Activated naive CD4-positive, alpha-beta T cell treated with anti-CD3 and anti-CD28 coated beads for 36 hours (primary cell): ENCODE measurements at regions of chr11 and their contacts with region 1.

Region 1: GRCh38 chr11:118002541-118003423 is 16.6 kb downstream of the IL10RA start:
- DNase-seq: peak; percentile 73
- H3K4me3 Mint-ChIP-seq: no peak overlapping the region
- H3K27ac Mint-ChIP-seq: peak overlapping the region; percentile 80
- H3K4me1 Mint-ChIP-seq: peaks cover 68% of the 10 kb centered on the region
- H3K27me3 Mint-ChIP-seq: no peaks in the 10 kb centered on the region

Region 2: DNA sequence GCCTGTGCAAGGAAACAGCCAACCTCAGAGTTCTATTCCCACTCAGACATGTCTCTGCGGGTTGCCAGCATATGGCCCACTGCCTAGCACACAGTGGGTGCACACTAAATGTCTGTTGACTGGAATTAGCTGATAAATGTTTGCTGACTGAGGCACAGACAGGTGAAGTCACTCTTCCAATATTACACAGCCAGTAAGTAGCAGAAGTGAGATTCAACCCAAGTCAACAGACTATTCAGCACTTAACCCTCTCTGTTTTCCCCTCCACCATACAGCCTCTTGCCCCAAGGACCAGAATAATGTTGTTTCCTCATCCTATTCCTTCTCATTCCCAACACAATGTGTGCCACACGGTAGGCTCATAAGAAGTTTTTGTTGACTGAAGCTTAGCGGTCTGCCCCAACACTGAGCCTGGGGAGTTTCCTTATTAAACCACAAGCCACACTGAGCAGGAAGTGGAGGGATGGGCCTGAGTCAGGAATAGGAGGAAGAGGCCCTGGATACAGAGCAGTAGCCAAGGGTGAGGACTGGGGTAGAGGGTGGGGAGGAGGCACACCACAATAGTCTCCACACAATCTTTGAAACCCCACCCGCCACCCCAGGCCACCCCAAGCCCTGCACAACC is 32.3 kb before region 1 on chr11:
- CTCF ChIA-PET with region 1: interaction called, 3 read pairs
- intact Hi-C with region 1: loop called (anchors 1 kb)
- DNase-seq: peak; percentile 71
- H3K4me3 Mint-ChIP-seq: peak overlapping the region; percentile 2
- H3K27ac Mint-ChIP-seq: peak overlapping the region; percentile 48
- H3K4me1 Mint-ChIP-seq: peaks cover 56% of the 10 kb centered on the region
- H3K27me3 Mint-ChIP-seq: no peaks in the 10 kb centered on the region

Region 3: DNA sequence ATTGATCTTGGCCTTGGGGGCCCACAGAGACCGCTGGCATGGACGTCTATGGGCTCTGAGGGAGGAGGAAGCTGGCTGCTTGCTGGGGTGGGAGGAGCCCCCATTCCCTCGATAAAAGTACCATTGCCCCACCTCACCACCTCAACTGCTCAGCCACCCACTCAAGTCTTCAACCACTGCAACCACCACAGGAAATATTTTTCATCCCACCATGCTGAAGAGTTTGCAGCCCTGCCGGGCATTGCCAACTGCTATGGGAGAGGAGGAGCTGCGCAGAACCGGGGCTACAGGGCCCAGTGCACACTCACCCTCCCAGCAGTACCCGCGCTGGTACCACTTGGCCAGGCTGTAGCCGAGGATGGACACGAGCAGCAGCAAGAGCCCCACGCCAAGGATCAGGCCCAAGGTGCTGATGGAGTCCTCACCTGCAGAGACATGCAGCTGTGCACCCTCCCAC is 12.6 kb after region 1 on chr11:
- CTCF ChIA-PET with region 1: interaction called, 3 read pairs
- intact Hi-C with region 1: loop called (anchors 1 kb)
- DNase-seq: no peak
- H3K4me3 Mint-ChIP-seq: no peak overlapping the region
- H3K27ac Mint-ChIP-seq: no peak overlapping the region
- H3K4me1 Mint-ChIP-seq: peaks cover 25% of the 10 kb centered on the region
- H3K27me3 Mint-ChIP-seq: no peaks in the 10 kb centered on the region